ENCODE measurements at regions of chr1 and their contacts with region 1.

Region 1: DNA sequence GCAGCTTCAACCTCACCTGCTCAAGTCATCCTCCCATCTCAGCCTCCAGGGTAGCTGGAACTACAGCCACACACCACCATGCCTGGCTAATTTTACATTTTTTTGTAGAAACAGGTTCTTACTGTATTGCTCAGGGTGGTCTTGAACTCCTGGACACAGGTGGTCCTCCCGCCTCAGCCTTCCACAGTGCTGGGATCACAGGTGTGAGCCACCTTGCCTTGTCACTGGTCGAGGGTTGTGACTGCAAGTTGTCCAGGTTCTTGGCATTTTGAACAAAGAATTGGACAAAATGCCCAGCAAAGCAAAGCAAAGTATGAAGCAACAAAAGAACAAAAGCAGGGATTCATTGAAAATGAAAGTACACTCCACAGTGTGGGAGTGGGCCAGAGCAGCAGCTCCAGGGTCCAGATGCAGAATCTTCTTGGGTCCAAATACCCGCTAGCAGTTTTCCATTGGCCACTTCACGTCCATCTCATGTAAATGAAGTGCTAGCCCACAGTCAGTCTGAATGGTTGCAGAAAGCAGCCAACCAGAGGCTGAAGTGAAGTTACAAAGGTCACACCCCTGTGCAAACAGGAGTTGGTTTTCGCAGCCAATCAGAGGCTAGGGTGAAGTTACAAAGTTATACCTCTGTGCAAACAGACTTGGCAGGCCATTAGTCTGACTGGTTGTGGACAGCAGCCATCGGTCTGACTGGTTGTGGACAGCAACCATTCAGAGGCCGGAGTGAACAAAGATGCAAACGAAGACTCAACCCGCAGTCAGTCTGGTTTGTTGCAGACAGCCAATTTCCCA is 109.5 kb upstream of the KIF26B start:
- DNase-seq: no peak
- H3K4me3 Mint-ChIP-seq: no peak overlapping the region
- H3K27ac Mint-ChIP-seq: no peak overlapping the region
- H3K4me1 Mint-ChIP-seq: no peaks in the 10 kb centered on the region
- H3K27me3 Mint-ChIP-seq: peaks cover 2% of the 10 kb centered on the region

Region 2: DNA sequence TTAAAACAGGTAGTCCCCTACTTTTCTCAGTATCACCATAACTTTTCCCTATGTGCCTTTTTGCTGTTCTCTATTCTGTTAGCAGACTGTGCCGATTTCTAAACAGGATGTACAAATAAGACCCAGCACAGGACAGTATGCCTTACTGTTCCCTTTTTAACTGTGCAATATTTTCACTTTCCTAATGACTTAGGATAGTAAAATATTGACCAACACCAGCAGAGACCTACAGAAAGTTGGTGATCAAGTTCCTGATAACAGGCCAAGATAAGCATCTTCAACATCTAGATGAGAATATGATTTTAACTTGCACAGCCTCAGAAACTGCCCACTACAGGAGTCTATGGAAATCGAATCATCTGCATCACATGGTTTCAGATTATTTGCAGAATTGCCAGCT is 635.6 kb before region 1 on chr1:
- intact Hi-C with region 1: no loop called
- DNase-seq: no peak
- H3K4me3 Mint-ChIP-seq: no peak overlapping the region
- H3K27ac Mint-ChIP-seq: no peak overlapping the region
- H3K4me1 Mint-ChIP-seq: peaks cover 16% of the 10 kb centered on the region
- H3K27me3 Mint-ChIP-seq: no peaks in the 10 kb centered on the region

Region 3: GRCh38 chr1:244796718-244797406 is 248.4 kb before region 1 on chr1:
- intact Hi-C with region 1: loop called (anchors 1 kb)
- DNase-seq: peak; percentile 85
- H3K4me3 Mint-ChIP-seq: no peak overlapping the region
- H3K27ac Mint-ChIP-seq: no peak overlapping the region
- H3K4me1 Mint-ChIP-seq: no peaks in the 10 kb centered on the region
- H3K27me3 Mint-ChIP-seq: peaks cover 4% of the 10 kb centered on the region

Region 4: GRCh38 chr1:244957525-244957924 is 87.8 kb before region 1 on chr1:
- intact Hi-C with region 1: loop called (anchors 5 kb)
- DNase-seq: no peak
- H3K4me3 Mint-ChIP-seq: no peak overlapping the region
- H3K27ac Mint-ChIP-seq: no peak overlapping the region
- H3K4me1 Mint-ChIP-seq: peaks cover 2% of the 10 kb centered on the region
- H3K27me3 Mint-ChIP-seq: peaks cover 2% of the 10 kb centered on the region

Measured in activated CD4-positive, alpha-beta T cell treated with anti-CD3 and anti-CD28 coated beads, Interleukin-2, amount 10 ng/mL, durations not matched to agents 24 days and 14 days (primary cell).